ENCODE measurements at regions of chr5 and their contacts with region 1.

Region 1: GRCh38 chr5:154467655-154468354 is 10.2 kb downstream of the HAND1 start:
- DNase-seq: peak; percentile 74
- ATAC-seq: peak; percentile 98
- H3K4me3 ChIP-seq: no peak overlapping the region
- H3K27ac ChIP-seq: no peak overlapping the region
- H3K4me1 ChIP-seq: no peaks in the 10 kb centered on the region
- H3K27me3 ChIP-seq: peaks cover 28% of the 10 kb centered on the region
- CTCF ChIP-seq: peak; percentile 83

Region 2: DNA sequence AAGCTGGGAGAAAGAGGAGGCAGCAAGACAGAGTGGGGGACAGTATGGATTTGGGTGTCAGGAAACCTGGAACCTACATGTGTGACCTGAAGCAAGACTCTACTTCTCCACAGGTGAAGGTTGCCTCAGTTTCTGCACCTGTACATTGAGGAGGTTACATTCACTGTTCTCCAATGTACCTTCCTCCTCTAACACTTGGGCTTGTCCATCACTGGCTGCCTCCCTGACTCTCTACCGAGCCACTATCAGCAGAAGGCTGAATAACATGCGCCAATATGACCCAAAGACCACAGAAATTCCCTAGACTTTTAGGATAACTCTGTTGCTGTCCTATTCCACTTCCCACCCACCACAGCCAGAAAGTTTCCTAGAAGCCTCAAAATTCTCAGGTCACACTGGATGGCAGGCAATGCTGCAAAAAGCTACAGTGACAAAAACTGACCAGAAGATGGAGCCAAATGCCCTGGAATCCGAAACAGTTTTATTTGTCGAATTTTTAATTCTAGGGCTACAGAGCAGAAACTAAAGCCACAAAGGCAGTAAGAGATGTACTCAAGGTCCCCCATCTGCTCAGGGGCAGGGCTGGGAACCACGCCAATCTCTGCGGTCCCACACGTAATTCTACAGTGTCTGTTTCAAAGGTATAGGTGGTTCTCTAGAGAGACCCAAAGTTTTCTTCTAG is 493.5 kb before region 1 on chr5:
- CTCF ChIA-PET with region 1: no interaction called
- POLR2A ChIA-PET with region 1: no interaction called
- intact Hi-C with region 1: loop called (anchors 2 kb)
- DNase-seq: peak; percentile 69
- ATAC-seq: peak; percentile 59
- H3K4me3 ChIP-seq: no peak overlapping the region
- H3K27ac ChIP-seq: no peak overlapping the region
- H3K4me1 ChIP-seq: no peaks in the 10 kb centered on the region
- H3K27me3 ChIP-seq: peaks cover 16% of the 10 kb centered on the region
- CTCF ChIP-seq: peak; percentile 78

Measured in PC-3 (cell line).